Heart right ventricle (tissue), 16 donors: ENCODE measurements at regions of chr22 and their contacts with region 1.

Region 1: GRCh38 chr22:27880778-27881394 is 38.2 kb downstream of the PITPNB start:
- DNase-seq: peak in 1 of 2 donors; percentile 68
- ATAC-seq: peak; percentile 58 to 89 (median 80)
- H3K4me3 ChIP-seq: no peak overlapping the region
- H3K27ac ChIP-seq: peak overlapping the region in 7 of 10 donors; percentile 10 to 46 (median 33)
- H3K4me1 ChIP-seq: peaks cover 3 to 77% (median 67%) of the 10 kb centered on the region in 9 donors
- H3K27me3 ChIP-seq: no peaks in the 10 kb centered on the region
- CTCF ChIP-seq: peak; percentile 76 to 87 (median 83)

Region 2: DNA sequence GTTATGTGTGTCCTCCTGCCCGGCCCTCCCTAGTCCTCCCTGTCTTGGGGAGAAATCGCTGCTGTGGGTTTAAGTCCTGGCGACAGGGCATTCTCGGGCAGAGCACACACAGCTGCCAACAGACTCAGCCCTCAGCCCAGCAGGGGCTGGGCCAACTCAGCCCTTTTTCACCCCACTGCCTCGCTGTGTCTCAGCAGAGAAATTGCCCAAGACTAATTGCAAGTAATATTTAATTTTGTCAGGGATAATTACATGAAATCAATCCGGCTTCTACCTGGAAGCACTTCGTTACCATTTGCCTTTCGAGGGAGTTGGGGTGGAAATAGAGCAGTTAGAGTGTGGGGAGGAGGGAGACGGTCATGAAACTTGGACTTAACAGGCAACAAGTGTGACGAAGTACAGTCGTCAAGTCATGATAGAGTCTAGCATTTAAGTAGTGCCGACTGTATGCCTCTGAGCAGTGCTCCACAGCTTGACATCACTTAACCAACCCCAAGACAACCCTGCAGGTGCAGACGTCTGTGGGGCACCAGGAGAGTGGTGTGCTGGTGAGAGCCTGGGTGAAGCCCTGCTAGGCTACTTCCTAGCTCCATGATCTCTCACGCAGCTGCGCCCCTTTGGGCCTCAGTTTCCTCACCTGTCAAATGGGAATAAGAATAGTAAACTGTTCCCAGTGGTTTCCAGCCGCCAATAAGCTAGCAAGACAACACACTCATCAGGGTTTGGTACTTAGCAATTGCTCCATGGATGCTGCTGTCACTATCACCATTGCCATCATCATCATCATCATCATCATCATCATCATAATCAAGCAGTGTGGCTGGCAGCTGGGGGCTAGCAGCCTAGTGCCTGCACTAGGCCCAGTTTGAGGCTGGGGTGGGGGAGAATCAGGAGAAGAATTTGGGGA is 108.6 kb before region 1 on chr22:
- intact Hi-C with region 1: no loop called
- DNase-seq: no peak
- ATAC-seq: no peak
- H3K4me3 ChIP-seq: no peak overlapping the region
- H3K27ac ChIP-seq: no peak overlapping the region
- H3K4me1 ChIP-seq: peaks cover 0 to 24% (median 20%) of the 10 kb centered on the region in 9 donors
- H3K27me3 ChIP-seq: peaks cover 0 to 8% (median 0%) of the 10 kb centered on the region in 7 donors
- CTCF ChIP-seq: no peak

Region 3: DNA sequence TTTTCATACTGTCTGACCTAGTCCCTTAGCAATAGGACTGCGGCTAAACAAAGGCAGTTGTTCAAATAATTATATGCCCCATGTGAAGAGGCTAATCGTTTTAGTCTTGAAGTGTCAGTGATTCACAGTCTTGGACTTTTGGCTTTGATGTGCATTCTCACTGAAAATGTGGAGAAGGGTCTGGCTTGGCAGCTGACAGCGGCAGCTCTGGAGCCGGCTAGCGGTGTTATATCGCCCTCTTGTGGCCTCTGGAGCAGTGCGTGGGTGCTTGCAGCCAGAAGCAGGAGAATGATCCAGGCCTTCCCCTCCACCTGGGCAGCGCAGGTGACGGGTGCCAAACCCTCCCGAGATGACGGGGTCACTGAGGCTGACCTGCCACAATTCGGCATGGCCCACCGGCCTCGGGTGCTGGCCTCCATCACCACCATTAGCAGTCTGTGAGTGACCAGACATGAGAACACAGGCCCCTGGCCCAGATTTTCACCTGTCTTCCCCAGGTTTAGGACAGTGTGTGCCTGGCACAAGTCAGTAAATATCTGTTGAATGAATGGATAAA is 128.5 kb after region 1 on chr22:
- intact Hi-C with region 1: loop called in 9 of 10 experiments (anchors 1 to 5 kb)
- DNase-seq: peak; percentile 75 to 77
- ATAC-seq: peak; percentile 73 to 83 (median 78)
- H3K4me3 ChIP-seq: no peak overlapping the region
- H3K27ac ChIP-seq: no peak overlapping the region
- H3K4me1 ChIP-seq: peaks cover 0 to 30% (median 17%) of the 10 kb centered on the region in 9 donors
- H3K27me3 ChIP-seq: no peaks in the 10 kb centered on the region
- CTCF ChIP-seq: peak; percentile 86 to 99 (median 98)